Activated naive CD4-positive, alpha-beta T cell treated with anti-CD3 and anti-CD28 coated beads for 36 hours (primary cell): ENCODE measurements at regions of chr12 and their contacts with region 1.

Region 1: DNA sequence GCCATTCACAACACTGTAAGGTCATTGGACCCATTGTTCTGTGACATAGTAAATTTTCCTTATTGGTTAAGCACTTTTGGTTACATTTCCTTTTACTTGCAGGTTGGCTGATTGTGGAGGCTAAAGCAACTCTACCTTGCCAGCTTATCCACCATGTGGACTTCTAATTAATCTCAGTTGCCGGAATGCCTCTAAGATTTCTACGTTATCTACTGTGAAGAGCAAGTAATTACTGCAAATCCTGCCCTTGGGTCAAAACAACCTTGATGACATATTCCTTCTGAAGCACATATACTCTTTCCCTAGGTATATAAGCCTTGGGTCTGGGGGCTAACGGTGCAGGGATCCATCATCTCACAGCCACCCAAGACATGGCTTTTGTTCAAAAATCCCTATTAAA is 19.5 kb upstream of the MORN3 start:
- DNase-seq: no peak
- H3K4me3 Mint-ChIP-seq: no peak overlapping the region
- H3K27ac Mint-ChIP-seq: no peak overlapping the region
- H3K4me1 Mint-ChIP-seq: peaks cover 6% of the 10 kb centered on the region
- H3K27me3 Mint-ChIP-seq: no peaks in the 10 kb centered on the region

Region 2: GRCh38 chr12:121351820-121352681 is 336.9 kb before region 1 on chr12 and contains the start of gene ANAPC5:
- CTCF ChIA-PET with region 1: no interaction called
- intact Hi-C with region 1: loop called (anchors 2 kb)
- DNase-seq: peak; percentile 96
- H3K4me3 Mint-ChIP-seq: peak within 1 kb of the TSS; percentile 98
- H3K27ac Mint-ChIP-seq: peak within 1 kb of the TSS; percentile 86
- H3K4me1 Mint-ChIP-seq: peaks cover 25% of the 10 kb centered on the region
- H3K27me3 Mint-ChIP-seq: no peaks in the 10 kb centered on the region
- total RNA-seq, gene ANAPC5: 117 to 119 TPM

Region 3: GRCh38 chr12:121413917-121414316 is 275.0 kb before region 1 on chr12:
- CTCF ChIA-PET with region 1: no interaction called
- intact Hi-C with region 1: no loop called
- DNase-seq: no peak
- H3K4me3 Mint-ChIP-seq: no peak overlapping the region
- H3K27ac Mint-ChIP-seq: no peak overlapping the region
- H3K4me1 Mint-ChIP-seq: peaks cover 18% of the 10 kb centered on the region
- H3K27me3 Mint-ChIP-seq: no peaks in the 10 kb centered on the region

Region 4: DNA sequence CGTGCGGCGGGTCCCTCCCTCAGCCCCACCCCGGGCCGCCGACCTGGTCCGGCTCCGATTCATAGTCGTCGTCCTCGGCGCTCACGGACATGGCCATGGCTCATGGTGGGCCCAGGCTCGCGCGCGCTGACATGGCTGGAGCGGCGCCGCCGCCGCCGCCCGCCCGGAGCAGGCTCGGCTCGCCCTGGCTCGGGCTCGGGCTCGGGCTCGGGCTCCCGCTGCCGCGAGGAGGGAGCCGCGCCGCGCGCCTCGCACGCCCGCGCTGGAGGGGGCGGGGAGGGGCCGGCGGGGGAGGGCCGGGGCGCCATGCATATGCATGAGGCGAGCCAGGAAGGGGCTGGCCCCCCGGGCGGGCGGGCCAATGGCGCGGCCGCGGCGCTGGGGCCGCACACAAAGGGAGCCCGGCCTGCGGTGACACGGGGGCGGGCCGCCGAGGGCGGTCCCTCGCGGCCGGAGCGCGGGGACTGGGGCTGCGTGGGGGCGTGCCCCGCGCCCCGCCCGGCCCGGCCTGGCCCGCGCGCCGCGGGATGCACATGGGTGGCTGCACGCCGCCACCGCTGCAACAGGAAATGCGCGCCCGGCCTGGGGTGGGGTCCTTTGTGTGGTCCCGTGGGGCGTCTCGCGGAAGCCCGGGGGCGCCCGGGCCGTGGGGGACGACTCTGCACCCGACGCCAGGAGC is 221.7 kb before region 1 on chr12:
- CTCF ChIA-PET with region 1: no interaction called
- intact Hi-C with region 1: loop called (anchors 10 kb)
- DNase-seq: peak; percentile 87
- H3K4me3 Mint-ChIP-seq: peak overlapping the region; percentile 43
- H3K27ac Mint-ChIP-seq: no peak overlapping the region
- H3K4me1 Mint-ChIP-seq: peaks cover 19% of the 10 kb centered on the region
- H3K27me3 Mint-ChIP-seq: no peaks in the 10 kb centered on the region

Region 5: DNA sequence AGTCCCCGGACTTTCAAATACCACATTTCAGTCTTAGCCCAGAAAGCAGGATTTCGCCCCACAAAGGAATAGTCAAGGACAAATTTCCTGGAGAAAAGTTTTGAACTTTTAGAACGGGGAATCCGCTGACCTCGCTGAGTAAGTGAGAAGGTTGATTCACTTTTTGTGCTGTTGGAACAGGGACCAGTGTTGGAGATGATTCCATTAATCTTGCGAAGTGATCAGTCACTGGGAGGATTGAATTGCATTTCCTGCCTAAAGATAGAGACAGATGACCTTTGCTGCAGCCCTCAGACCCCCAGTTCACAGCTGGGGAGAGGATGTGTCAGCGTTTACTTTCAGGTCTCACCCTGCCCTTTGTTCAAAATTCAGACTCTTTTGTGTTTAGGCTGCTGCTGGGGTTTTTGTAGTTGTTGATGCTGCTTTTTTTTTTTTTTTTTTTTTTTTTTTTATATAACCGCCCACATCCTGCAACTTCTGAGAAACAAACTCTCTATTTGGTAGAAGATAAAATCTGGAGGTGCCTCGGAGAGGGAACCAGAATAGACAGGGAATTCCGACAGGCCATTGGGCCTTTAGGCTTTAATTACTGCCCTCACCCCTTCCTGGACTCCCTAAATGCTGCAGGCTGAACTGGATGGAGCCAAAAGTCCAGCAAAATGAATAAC is 98.4 kb before region 1 on chr12:
- CTCF ChIA-PET with region 1: no interaction called
- intact Hi-C with region 1: loop called (anchors 1 kb)
- DNase-seq: peak; percentile 80
- H3K4me3 Mint-ChIP-seq: peak overlapping the region; percentile 85
- H3K27ac Mint-ChIP-seq: peak overlapping the region; percentile 96
- H3K4me1 Mint-ChIP-seq: peaks cover 30% of the 10 kb centered on the region
- H3K27me3 Mint-ChIP-seq: no peaks in the 10 kb centered on the region

Region 6: GRCh38 chr12:121712461-121713256 is 23.7 kb after region 1 on chr12 and contains the start of gene TMEM120B:
- CTCF ChIA-PET with region 1: no interaction called
- intact Hi-C with region 1: loop called (anchors 1 kb)
- DNase-seq: peak; percentile 77
- H3K4me3 Mint-ChIP-seq: peak within 1 kb of the TSS; percentile 87
- H3K27ac Mint-ChIP-seq: peak within 1 kb of the TSS; percentile 77
- H3K4me1 Mint-ChIP-seq: peaks cover 19% of the 10 kb centered on the region
- H3K27me3 Mint-ChIP-seq: no peaks in the 10 kb centered on the region
- total RNA-seq, gene TMEM120B: 5.5 to 6.3 TPM

Region 7: DNA sequence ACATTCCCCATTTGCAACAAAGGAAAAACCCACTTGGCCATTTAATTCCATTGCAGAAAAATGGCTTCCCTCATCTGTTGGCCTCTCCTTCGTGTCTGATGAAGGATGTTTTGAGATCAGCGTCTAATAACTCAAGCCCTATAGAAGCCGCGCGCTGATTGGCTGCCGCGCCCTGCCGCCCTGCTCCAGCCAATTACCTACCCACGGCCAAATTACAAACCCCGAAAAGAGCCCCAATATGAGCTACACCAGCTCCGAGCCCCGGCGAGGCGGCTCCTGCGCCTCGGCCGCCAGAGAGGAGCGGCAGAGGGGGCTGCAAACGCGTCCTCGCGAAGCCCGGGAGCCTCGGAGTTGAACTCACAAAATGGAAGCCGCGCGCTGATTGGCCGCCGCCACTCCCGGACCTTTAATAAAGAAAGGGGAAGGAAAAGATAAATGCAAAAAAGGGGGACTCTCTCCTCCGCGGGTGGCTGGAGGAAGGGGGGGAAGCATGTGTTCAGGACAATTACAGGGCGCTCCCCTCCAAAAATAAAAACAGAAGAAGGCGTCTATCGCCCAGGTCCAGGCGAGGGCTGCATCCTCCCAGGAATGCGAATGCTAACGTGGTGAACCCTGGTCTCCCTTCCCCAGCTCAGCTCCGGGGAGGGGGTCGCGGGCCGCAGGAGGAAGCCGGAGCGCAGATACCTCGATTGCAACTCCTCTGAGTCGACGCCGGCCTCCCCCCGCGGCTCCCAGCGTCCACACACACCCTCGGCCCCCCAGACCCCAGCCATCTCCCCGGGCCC is 114.1 kb after region 1 on chr12:
- CTCF ChIA-PET with region 1: interaction called, 119 read pairs
- intact Hi-C with region 1: loop called (anchors 1 kb)
- DNase-seq: peak; percentile 95
- H3K4me3 Mint-ChIP-seq: peak overlapping the region; percentile 97
- H3K27ac Mint-ChIP-seq: peak overlapping the region; percentile 100
- H3K4me1 Mint-ChIP-seq: peaks cover 33% of the 10 kb centered on the region
- H3K27me3 Mint-ChIP-seq: no peaks in the 10 kb centered on the region

Region 8: DNA sequence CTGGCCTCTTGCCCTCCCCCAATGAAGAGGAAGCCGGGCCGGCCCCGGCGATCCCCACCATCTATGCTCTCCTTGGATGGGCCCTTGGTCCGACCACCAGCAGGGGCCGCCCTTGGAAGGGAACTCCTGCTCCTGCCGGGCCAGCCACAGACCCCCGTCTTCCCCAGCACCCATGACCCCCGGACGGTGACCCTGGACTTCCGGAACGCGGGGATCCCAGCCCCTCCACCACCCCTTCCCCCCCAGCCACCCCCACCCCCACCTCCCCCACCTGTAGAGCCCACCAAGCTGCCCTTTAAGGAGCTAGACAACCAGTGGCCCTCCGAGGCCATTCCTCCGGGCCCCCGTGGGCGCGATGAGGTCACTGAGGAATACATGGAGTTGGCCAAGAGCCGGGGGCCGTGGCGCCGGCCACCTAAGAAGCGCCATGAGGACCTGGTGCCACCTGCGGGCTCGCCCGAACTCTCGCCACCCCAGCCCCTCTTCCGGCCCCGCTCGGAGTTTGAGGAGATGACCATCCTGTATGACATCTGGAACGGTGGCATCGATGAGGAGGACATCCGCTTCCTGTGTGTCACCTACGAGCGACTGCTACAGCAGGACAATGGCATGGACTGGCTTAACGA is 134.2 kb after region 1 on chr12:
- CTCF ChIA-PET with region 1: no interaction called
- intact Hi-C with region 1: no loop called
- DNase-seq: no peak
- H3K4me3 Mint-ChIP-seq: no peak overlapping the region
- H3K27ac Mint-ChIP-seq: no peak overlapping the region
- H3K4me1 Mint-ChIP-seq: no peaks in the 10 kb centered on the region
- H3K27me3 Mint-ChIP-seq: no peaks in the 10 kb centered on the region

Region 9: GRCh38 chr12:121903202-121903601 is 214.2 kb after region 1 on chr12:
- CTCF ChIA-PET with region 1: no interaction called
- intact Hi-C with region 1: no loop called
- DNase-seq: no peak
- H3K4me3 Mint-ChIP-seq: no peak overlapping the region
- H3K27ac Mint-ChIP-seq: no peak overlapping the region
- H3K4me1 Mint-ChIP-seq: no peaks in the 10 kb centered on the region
- H3K27me3 Mint-ChIP-seq: no peaks in the 10 kb centered on the region